Upper lobe of right lung (tissue), 1 donor: ENCODE measurements at regions of chr2 and their contacts with region 1.

Region 1: GRCh38 chr2:112726497-112727190 is 5.8 kb downstream of the NT5DC4 start:
- DNase-seq: peak; percentile 96
- ATAC-seq: peak; percentile 94
- H3K4me3 ChIP-seq: no peak overlapping the region
- H3K27ac ChIP-seq: no peak overlapping the region
- H3K4me1 ChIP-seq: peaks cover 3% of the 10 kb centered on the region
- H3K27me3 ChIP-seq: no peaks in the 10 kb centered on the region
- CTCF ChIP-seq: peak; percentile 96

Region 2: DNA sequence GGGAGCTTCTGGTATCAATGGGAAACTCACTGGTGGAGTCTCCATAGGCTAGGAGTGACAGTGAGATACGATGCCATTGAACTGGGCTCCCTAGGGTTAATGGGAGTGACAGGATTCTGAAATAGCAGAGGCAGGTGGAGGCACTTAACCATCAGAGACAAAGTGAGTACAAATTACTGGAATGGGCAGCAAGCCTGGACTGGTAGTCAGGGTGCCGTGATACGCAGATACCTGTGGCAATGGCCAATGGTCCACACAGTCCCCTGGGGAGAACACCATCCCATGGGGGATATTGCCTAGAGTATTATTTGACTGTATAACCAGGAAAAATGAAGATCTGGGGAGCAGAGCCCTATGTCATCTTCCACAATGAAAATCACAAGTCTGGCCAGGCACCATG is 124.9 kb before region 1 on chr2:
- intact Hi-C with region 1: loop called (anchors 5 kb)
- DNase-seq: no peak
- ATAC-seq: no peak
- H3K4me3 ChIP-seq: no peak overlapping the region
- H3K27ac ChIP-seq: no peak overlapping the region
- H3K4me1 ChIP-seq: peaks cover 4% of the 10 kb centered on the region
- H3K27me3 ChIP-seq: no peaks in the 10 kb centered on the region
- CTCF ChIP-seq: no peak

Region 3: DNA sequence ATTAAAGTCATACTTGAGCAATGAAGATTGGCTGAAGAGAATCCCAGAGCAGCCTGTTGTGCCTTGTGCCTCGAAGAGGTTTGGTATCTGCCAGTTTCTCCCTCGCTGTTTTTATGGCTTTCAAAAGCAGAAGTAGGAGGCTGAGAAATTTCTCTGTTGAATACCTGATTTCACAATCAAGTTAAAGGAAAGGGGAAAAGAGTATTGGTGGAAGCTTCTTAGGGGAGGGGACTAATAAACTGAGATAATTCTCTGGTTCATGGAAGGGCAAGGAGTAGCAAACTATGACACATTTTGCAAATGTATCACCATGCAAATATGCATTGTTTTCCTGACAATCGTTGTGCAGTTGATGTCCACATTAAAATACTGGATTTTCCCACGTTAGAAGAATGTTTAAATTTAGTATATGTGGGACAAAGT is 110.1 kb after region 1 on chr2 and contains the start of gene IL1B:
- intact Hi-C with region 1: no loop called
- DNase-seq: no peak
- ATAC-seq: peak; percentile 49
- H3K4me3 ChIP-seq: peak within 1 kb of the TSS; percentile 31
- H3K27ac ChIP-seq: no peak within 1 kb of the TSS
- H3K4me1 ChIP-seq: no peaks in the 10 kb centered on the region
- H3K27me3 ChIP-seq: no peaks in the 10 kb centered on the region
- CTCF ChIP-seq: no peak
- total RNA-seq, gene IL1B: 11.5 TPM